Panc1 (cell line): ENCODE measurements at regions of chr13 and their contacts with region 1.

Region 1: DNA sequence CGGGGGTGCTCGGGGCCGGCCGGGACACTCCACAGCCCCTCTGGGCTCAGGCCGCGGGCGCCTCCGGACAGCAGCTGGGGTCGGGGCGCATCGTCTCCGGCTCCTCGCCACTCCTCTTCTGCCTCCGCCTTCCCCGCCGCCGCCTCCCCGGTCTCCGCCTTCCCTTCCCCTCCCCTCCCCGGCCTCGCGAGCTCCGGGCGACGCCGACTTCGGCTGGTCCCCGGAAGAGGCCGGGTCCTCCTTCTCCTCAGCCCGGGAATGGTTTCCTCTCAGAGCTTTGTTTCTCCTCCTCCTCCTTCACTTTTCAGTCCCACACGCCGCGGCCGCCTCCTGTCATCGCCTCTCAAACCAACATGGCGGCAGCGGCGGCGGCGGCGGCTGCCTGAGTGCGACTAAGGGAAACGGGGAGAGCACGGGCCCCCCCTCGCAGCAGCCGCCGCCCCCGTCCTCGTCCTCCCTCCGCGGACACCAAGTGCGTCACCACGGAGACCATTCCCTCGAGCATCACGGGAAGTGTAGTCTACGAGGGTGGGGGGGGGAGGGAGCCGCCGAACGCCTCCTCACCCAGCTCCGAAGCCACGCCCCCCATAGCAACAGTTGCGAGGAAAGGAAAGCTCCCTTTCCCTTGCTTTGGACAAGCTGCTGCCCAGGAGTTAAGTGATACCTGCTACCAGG is at the start of gene UBL3:
- DNase-seq: no peak
- ATAC-seq: peak; percentile 91
- H3K4me3 ChIP-seq: peak within 1 kb of the TSS; percentile 87 to 88
- H3K27ac ChIP-seq: peak within 1 kb of the TSS; percentile 83
- H3K4me1 ChIP-seq: peaks cover 11% of the 10 kb centered on the region; the same call in 1 of the 2 replicates
- H3K27me3 ChIP-seq: no peaks in the 10 kb centered on the region
- CTCF ChIP-seq: no peak
- total RNA-seq, gene UBL3: 11.1 TPM

Region 2: GRCh38 chr13:29595380-29596063 is 254.8 kb before region 1 on chr13 and contains the start of gene SLC7A1:
- CTCF ChIA-PET with region 1: no interaction called
- POLR2A ChIA-PET with region 1: no interaction called
- in situ Hi-C with region 1: no loop called
- intact Hi-C with region 1: no loop called
- DNase-seq: no peak
- ATAC-seq: peak; percentile 97
- H3K4me3 ChIP-seq: peak within 1 kb of the TSS; percentile 77 to 91
- H3K27ac ChIP-seq: peak within 1 kb of the TSS; percentile 83
- H3K4me1 ChIP-seq: peaks cover 13% of the 10 kb centered on the region
- H3K27me3 ChIP-seq: no peaks in the 10 kb centered on the region
- CTCF ChIP-seq: no peak
- total RNA-seq, gene SLC7A1: 63.3 TPM

Region 3: DNA sequence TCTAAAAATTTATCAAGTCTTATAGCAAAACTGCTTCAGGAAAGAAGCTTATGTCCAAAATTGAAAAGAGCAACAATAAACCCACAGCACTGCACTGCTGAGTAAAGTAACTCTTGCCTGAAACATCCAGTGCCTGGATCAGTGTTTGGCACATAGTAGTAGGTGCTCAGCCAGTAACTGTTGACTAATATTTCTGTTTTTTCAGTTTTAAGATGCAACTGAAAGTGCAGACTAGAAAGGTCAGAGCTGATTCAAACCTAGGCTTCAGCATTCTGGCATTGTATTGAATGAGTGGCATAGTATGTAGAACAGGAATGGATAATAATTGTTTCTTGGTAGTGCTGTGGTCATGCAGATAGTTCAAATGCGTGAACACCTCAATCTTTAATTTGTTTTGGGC is 67.6 kb before region 1 on chr13:
- CTCF ChIA-PET with region 1: no interaction called
- POLR2A ChIA-PET with region 1: no interaction called
- in situ Hi-C with region 1: no loop called
- intact Hi-C with region 1: loop called (anchors 2 kb)
- DNase-seq: no peak
- ATAC-seq: no peak
- H3K4me3 ChIP-seq: no peak overlapping the region
- H3K27ac ChIP-seq: no peak overlapping the region
- H3K4me1 ChIP-seq: no peaks in the 10 kb centered on the region
- H3K27me3 ChIP-seq: no peaks in the 10 kb centered on the region
- CTCF ChIP-seq: no peak

Region 4: DNA sequence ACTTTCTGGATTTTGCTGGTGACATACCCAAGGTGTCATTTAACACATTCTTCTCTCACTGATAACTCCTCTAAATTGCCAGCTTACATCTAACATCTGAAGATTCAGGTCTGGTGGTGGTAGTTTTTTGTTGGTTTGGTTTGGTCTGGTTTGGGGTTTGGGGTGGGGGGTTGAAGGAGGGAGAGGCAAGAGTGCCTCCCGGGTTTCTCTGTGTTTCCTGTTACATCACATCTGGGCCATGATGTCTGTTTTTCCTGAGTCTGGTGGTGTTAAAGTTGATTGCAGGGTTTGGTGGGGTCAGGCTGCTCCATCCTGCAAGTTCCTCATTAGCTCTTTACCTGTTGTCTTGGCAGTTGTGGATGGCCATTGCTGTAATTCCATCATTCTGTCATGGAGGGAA is 155.9 kb after region 1 on chr13:
- CTCF ChIA-PET with region 1: interaction called, 10 read pairs
- POLR2A ChIA-PET with region 1: interaction called, 8 read pairs
- in situ Hi-C with region 1: no loop called
- intact Hi-C with region 1: no loop called
- DNase-seq: no peak
- ATAC-seq: no peak
- H3K4me3 ChIP-seq: no peak overlapping the region
- H3K27ac ChIP-seq: no peak overlapping the region
- H3K4me1 ChIP-seq: no peaks in the 10 kb centered on the region
- H3K27me3 ChIP-seq: peaks cover 3% of the 10 kb centered on the region; the same call in 1 of the 2 replicates
- CTCF ChIP-seq: no peak

Region 5: DNA sequence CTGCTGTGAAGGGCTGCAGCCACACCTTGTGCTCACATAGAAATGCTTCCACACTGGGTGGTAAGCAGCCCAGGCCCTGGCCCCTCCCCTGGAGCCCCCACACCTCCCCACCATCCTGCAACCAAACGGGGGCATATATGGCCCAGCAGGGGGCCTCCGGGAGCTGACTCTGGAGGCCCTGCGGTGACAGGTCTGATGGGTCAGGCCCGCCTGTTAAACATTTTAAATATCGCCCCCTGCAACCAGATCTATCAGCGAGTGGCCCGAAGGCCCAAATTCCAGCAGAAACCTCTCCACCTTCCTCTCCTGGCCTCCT is 505.0 kb after region 1 on chr13:
- CTCF ChIA-PET with region 1: no interaction called
- POLR2A ChIA-PET with region 1: interaction called, 10 read pairs
- in situ Hi-C with region 1: no loop called
- intact Hi-C with region 1: no loop called
- DNase-seq: no peak
- ATAC-seq: no peak
- H3K4me3 ChIP-seq: no peak overlapping the region
- H3K27ac ChIP-seq: no peak overlapping the region
- H3K4me1 ChIP-seq: no peaks in the 10 kb centered on the region
- H3K27me3 ChIP-seq: no peaks in the 10 kb centered on the region
- CTCF ChIP-seq: peak; percentile 36